Heart left ventricle (tissue), 16 donors: ENCODE measurements at regions of chr2 and their contacts with region 1.

Region 1: GRCh38 chr2:41853427-41854216 is 194.2 kb upstream of the PKDCC start:
- DNase-seq: peak in 2 of 5 donors; percentile 23 to 38
- ATAC-seq: peak in 3 of 4 donors; percentile 9 to 36 (median 20)
- H3K4me3 ChIP-seq: no peak overlapping the region
- H3K27ac ChIP-seq: no peak overlapping the region
- H3K4me1 ChIP-seq: peaks cover 0 to 4% (median 0%) of the 10 kb centered on the region in 12 donors
- H3K27me3 ChIP-seq: peaks cover 0 to 7% (median 0%) of the 10 kb centered on the region in 9 donors
- CTCF ChIP-seq: peak; percentile 61 to 77 (median 70)
- POLR2A ChIP-seq: no peak

Region 2: DNA sequence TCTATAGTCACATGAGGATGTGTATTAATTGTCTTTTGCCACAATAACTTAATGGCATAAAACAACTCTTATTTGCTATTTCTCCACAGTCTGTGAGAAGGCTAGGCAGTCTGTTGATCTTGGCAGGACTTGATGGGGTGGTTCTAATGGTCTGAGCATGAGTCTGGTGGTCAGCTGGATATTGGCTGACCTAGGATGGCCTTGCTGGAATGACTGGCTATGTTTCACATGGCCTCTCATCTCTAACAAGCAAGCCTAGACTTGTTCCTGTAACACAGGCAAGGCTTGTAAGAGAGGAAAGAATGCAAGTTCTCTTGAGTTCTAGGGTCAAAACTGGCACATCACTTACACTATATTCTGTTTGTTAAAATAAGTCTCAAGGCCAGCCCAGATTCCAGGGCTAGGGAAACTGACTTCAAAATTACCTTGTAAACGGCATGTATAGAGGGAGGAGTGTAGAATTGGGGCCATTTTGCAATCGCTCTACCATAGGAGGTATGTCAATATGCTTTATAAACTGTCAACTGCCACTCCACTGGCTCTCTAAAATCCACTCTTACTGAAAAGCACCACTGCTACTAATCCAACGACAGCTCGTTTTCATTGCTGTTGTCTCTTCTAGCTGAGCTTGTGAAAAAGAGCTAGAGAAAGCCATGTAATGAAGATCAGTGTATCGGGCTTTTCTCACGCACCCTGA is 130.8 kb before region 1 on chr2:
- intact Hi-C with region 1: no loop called
- DNase-seq: peak in 4 of 5 donors; percentile 37 to 47 (median 46)
- ATAC-seq: peak; percentile 77 to 93 (median 91)
- H3K4me3 ChIP-seq: no peak overlapping the region
- H3K27ac ChIP-seq: peak overlapping the region in 10 of 12 donors; percentile 10 to 81 (median 62)
- H3K4me1 ChIP-seq: peaks cover 0 to 42% (median 9%) of the 10 kb centered on the region in 12 donors
- H3K27me3 ChIP-seq: no peaks in the 10 kb centered on the region
- CTCF ChIP-seq: no peak
- POLR2A ChIP-seq: no peak

Region 3: DNA sequence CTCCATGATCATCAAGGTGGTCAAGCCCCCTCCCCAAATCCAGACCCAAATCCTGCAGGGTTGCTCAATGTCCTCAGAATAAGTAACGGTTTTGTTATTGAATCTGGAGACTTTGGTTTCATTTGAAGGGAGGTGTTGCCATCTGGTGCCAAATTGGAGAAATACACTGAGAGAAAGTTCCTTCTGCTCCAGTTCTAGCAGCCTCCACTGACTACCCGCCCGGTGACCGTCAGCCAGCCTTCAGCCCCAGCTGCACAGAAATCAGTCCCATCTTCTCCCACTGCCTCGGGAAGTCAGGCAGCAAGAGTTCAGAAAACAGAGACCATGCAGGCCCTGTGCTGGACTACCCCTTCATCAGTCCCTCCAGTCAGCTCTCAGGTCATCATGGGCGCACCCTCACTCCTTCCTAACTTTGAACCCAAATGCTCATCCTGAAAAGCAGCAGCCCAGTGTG is 232.9 kb after region 1 on chr2:
- intact Hi-C with region 1: loop called in 9 of 10 experiments (anchors 1 to 5 kb)
- DNase-seq: peak in 2 of 5 donors; percentile 35 to 39
- ATAC-seq: peak in 3 of 4 donors; percentile 57 to 67 (median 58)
- H3K4me3 ChIP-seq: no peak overlapping the region
- H3K27ac ChIP-seq: no peak overlapping the region
- H3K4me1 ChIP-seq: peaks cover 0 to 21% (median 0%) of the 10 kb centered on the region in 12 donors
- H3K27me3 ChIP-seq: no peaks in the 10 kb centered on the region
- CTCF ChIP-seq: peak; percentile 49 to 82 (median 76)
- POLR2A ChIP-seq: no peak

Region 4: GRCh38 chr2:42328148-42328833 is 474.7 kb after region 1 on chr2:
- intact Hi-C with region 1: loop called in 1 of 10 experiments (anchors 10 kb)
- DNase-seq: no peak
- ATAC-seq: peak in 1 of 4 donors; percentile 34
- H3K4me3 ChIP-seq: no peak overlapping the region
- H3K27ac ChIP-seq: no peak overlapping the region
- H3K4me1 ChIP-seq: no peaks in the 10 kb centered on the region
- H3K27me3 ChIP-seq: no peaks in the 10 kb centered on the region
- CTCF ChIP-seq: peak in 11 of 12 donors; percentile 22 to 57 (median 43)
- POLR2A ChIP-seq: no peak